ENCODE measurements at regions of chr6 and their contacts with region 1.

Region 1: GRCh38 chr6:142112451-142113061 is 20.2 kb upstream of the GJE1 start:
- DNase-seq: peak; percentile 51 to 56 (median 55)
- H3K4me3 ChIP-seq: no peak overlapping the region
- H3K4me3 Mint-ChIP-seq: no peak overlapping the region
- H3K27ac ChIP-seq: no peak overlapping the region
- H3K27ac Mint-ChIP-seq: no peak overlapping the region
- H3K4me1 ChIP-seq: no peaks in the 10 kb centered on the region
- H3K4me1 Mint-ChIP-seq: peaks cover 0 to 2% (median 0%) of the 10 kb centered on the region in 4 donors
- H3K27me3 ChIP-seq: no peaks in the 10 kb centered on the region
- H3K27me3 Mint-ChIP-seq: peaks cover 2% of the 10 kb centered on the region in 2 donors

Region 2: DNA sequence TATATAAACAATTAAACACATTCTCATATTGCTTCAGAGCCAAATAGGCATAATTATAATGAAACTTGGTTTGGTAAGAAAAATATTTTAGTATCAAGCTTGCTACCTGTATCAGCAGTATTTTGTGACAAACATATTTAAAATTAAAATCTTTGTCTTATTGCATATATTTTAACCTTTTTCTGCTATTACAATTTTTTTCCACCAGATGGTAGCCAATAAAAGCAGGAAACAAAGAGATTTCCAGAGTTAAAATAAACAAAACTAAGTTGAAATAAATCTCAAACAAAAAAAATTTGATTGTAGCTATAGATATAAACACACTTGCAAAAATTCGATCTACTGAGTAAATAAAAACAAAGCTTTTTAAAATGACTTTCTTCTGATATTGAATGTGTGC is 471.1 kb before region 1 on chr6:
- CTCF ChIA-PET with region 1: no interaction called
- POLR2A ChIA-PET with region 1: no interaction called
- intact Hi-C with region 1: loop called (anchors 1 kb)
- DNase-seq: no peak
- H3K4me3 ChIP-seq: no peak overlapping the region
- H3K4me3 Mint-ChIP-seq: no peak overlapping the region
- H3K27ac ChIP-seq: no peak overlapping the region
- H3K27ac Mint-ChIP-seq: no peak overlapping the region
- H3K4me1 ChIP-seq: no peaks in the 10 kb centered on the region
- H3K4me1 Mint-ChIP-seq: no peaks in the 10 kb centered on the region
- H3K27me3 ChIP-seq: no peaks in the 10 kb centered on the region
- H3K27me3 Mint-ChIP-seq: peaks cover 0 to 3% of the 10 kb centered on the region in 2 donors

Region 3: GRCh38 chr6:141988954-141989705 is 123.4 kb before region 1 on chr6:
- CTCF ChIA-PET with region 1: interaction called, 9 read pairs
- POLR2A ChIA-PET with region 1: no interaction called
- intact Hi-C with region 1: loop called (anchors 1 kb)
- DNase-seq: peak; percentile 21 to 33 (median 26)
- H3K4me3 ChIP-seq: no peak overlapping the region
- H3K4me3 Mint-ChIP-seq: no peak overlapping the region
- H3K27ac ChIP-seq: no peak overlapping the region
- H3K27ac Mint-ChIP-seq: no peak overlapping the region
- H3K4me1 ChIP-seq: no peaks in the 10 kb centered on the region
- H3K4me1 Mint-ChIP-seq: peaks cover 0 to 6% (median 4%) of the 10 kb centered on the region in 4 donors
- H3K27me3 ChIP-seq: no peaks in the 10 kb centered on the region
- H3K27me3 Mint-ChIP-seq: peaks cover 1 to 4% of the 10 kb centered on the region in 2 donors

Region 4: GRCh38 chr6:142207265-142207877 is 94.8 kb after region 1 on chr6:
- CTCF ChIA-PET with region 1: no interaction called
- POLR2A ChIA-PET with region 1: no interaction called
- intact Hi-C with region 1: loop called (anchors 1 kb)
- DNase-seq: peak; percentile 27 to 42 (median 33)
- H3K4me3 ChIP-seq: no peak overlapping the region
- H3K4me3 Mint-ChIP-seq: no peak overlapping the region
- H3K27ac ChIP-seq: no peak overlapping the region
- H3K27ac Mint-ChIP-seq: peak overlapping the region in 2 of 7 donors; percentile 35 to 74
- H3K4me1 ChIP-seq: no peaks in the 10 kb centered on the region
- H3K4me1 Mint-ChIP-seq: peaks cover 0 to 5% (median 2%) of the 10 kb centered on the region in 4 donors
- H3K27me3 ChIP-seq: no peaks in the 10 kb centered on the region
- H3K27me3 Mint-ChIP-seq: no peaks in the 10 kb centered on the region